PC-9 (cell line): ENCODE measurements at regions of chr3 and their contacts with region 1.

Region 1: DNA sequence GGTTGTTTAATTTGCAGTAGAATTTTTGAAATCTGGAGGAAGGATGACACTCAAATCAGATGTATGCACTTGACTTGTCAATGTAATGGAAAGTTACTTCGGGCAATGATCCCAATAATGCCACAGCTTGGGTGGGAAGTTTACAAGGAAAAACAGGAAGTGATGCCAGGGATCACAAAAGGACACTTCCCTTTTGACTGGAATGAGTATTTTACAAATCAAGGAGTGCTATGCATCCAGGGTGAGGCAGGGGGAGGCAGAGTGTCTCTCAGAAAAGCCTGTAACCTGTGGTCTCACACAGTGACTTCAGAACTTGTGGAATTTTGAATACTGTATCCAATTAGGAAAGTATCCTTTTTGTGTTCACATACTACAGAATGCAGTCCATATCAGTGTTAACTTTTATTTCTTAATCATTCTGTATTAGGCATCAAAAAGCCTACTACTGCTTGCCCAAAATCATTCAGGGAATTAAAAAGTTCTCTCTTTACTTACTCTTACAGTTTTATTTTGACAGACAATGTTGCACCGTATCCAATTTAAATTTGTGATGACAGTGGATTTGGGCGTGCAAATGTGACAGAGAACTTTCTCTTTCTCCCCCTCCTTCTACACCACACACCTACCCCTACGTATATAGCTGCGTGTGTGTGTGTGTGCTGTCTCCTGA is 445.1 kb downstream of the MECOM start:
- DNase-seq: peak in 1 of 2 experiments; percentile 52
- H3K4me3 ChIP-seq: no peak overlapping the region
- H3K27ac ChIP-seq: no peak overlapping the region
- H3K4me1 ChIP-seq: no peaks in the 10 kb centered on the region
- H3K27me3 ChIP-seq: no peaks in the 10 kb centered on the region
- CTCF ChIP-seq: peak; percentile 71

Region 2: DNA sequence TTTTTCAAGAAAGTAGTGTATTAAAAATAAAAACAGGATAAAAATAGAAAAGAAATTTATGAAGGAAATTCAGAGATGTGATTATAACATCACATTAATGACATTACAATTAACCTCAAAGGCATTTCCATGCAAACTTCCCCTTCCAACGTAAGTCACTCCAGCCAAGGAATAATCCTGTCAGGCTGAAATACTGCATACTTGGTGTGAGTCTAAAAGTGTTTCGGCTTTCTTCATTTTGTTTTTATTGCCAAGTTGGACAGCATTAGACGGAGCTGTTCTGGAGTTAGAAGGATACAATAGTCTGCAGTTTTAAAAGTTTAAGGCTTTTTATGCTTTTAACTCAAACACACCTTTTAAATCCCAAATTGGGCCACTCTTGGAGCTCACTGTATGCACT is 10.1 kb after region 1 on chr3:
- CTCF ChIA-PET with region 1: no interaction called
- POLR2A ChIA-PET with region 1: interaction called, 21 read pairs
- intact Hi-C with region 1: no loop called
- DNase-seq: no peak
- H3K4me3 ChIP-seq: no peak overlapping the region
- H3K27ac ChIP-seq: no peak overlapping the region
- H3K4me1 ChIP-seq: no peaks in the 10 kb centered on the region
- H3K27me3 ChIP-seq: no peaks in the 10 kb centered on the region
- CTCF ChIP-seq: no peak

Region 3: DNA sequence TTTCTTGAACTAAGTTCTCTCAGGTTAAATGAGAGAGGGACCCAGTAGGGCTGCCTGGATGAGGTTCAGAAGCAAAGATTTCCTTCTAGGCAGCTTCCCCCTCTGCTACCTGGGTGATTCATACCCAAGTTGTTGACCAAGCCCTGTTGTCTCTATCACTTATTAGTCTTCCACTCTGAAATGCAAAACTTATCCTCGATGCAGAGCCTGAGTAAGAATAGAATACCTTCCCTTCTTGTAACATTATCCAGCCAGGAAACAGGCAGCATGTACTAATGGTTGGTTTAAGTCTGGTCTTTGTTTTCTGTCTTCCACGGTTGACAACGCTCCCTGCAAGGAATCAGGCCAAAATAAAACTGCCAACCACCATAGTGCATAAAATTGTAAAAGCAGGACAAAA is 67.8 kb after region 1 on chr3:
- CTCF ChIA-PET with region 1: no interaction called
- POLR2A ChIA-PET with region 1: no interaction called
- intact Hi-C with region 1: no loop called
- DNase-seq: no peak
- H3K4me3 ChIP-seq: no peak overlapping the region
- H3K27ac ChIP-seq: no peak overlapping the region
- H3K4me1 ChIP-seq: no peaks in the 10 kb centered on the region
- H3K27me3 ChIP-seq: no peaks in the 10 kb centered on the region
- CTCF ChIP-seq: no peak

Region 4: GRCh38 chr3:169420429-169420828 is 202.0 kb after region 1 on chr3:
- CTCF ChIA-PET with region 1: interaction called, 10 read pairs
- POLR2A ChIA-PET with region 1: no interaction called
- intact Hi-C with region 1: no loop called
- DNase-seq: no peak
- H3K4me3 ChIP-seq: no peak overlapping the region
- H3K27ac ChIP-seq: no peak overlapping the region
- H3K4me1 ChIP-seq: no peaks in the 10 kb centered on the region
- H3K27me3 ChIP-seq: no peaks in the 10 kb centered on the region
- CTCF ChIP-seq: no peak